ENCODE measurements at regions of chr9 and their contacts with region 1.

Region 1: GRCh38 chr9:97632985-97633858 is at the starts of genes NCBP1 and TSTD2:
- DNase-seq: peak; percentile 98
- ATAC-seq: peak; percentile 91
- H3K4me3 Mint-ChIP-seq: peak within 1 kb of the TSS; percentile 92
- H3K27ac Mint-ChIP-seq: peak within 1 kb of the TSS; percentile 99
- H3K4me1 Mint-ChIP-seq: peaks cover 48% of the 10 kb centered on the region
- H3K27me3 Mint-ChIP-seq: no peaks in the 10 kb centered on the region
- total RNA-seq, gene NCBP1: 42.2 to 43.0 TPM
- total RNA-seq, gene TSTD2: 12.7 to 15.0 TPM

Region 2: DNA sequence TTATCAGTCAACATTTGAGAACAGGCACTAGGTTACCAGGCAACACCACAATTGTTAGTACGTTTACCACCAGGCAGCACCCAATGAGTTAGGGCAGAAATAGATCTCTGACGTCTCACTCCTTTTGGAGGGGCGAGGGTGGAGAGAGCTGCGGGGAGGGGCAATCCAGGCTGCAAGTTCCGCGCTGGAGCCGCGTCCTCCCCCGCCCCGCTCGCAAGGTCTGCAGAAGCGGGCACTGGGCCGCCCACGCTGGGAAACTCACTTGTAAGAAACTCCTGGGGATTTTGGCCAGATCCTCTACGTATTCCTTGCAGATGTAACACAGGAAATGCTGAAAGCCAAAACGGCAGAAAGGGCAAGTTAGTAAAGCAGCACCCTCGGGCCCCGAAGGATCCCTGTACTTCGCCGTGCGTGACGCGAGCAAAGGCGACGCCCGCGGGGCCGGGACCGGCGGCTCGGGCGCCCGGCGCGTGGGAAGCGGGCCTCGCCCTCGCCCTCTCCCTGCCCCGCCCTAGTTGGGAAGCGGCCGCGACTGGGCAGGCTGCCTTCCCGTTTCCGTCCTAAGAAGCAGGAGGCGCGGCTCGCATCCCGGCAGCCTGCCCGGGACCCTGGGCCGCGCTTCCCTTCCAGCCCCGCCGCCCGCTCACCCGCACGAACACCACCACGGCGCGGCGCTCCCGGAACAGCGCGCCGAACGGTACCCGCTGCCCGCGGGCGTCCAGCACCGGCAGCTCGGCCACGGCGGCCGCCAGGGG is 978.6 kb before region 1 on chr9:
- CTCF ChIA-PET with region 1: no interaction called
- POLR2A ChIA-PET with region 1: no interaction called
- intact Hi-C with region 1: loop called in 1 of 2 experiments (anchors 2 kb)
- DNase-seq: peak; percentile 78
- ATAC-seq: peak; percentile 69
- H3K4me3 Mint-ChIP-seq: peak overlapping the region; percentile 78
- H3K27ac Mint-ChIP-seq: peak overlapping the region; percentile 78
- H3K4me1 Mint-ChIP-seq: peaks cover 15% of the 10 kb centered on the region
- H3K27me3 Mint-ChIP-seq: no peaks in the 10 kb centered on the region

Region 3: GRCh38 chr9:97411789-97412625 is 221.2 kb before region 1 on chr9 and contains the start of gene TDRD7:
- CTCF ChIA-PET with region 1: interaction called, 5 read pairs
- POLR2A ChIA-PET with region 1: no interaction called
- intact Hi-C with region 1: loop called in 1 of 2 experiments (anchors 1 kb)
- DNase-seq: peak; percentile 94
- ATAC-seq: peak; percentile 91
- H3K4me3 Mint-ChIP-seq: peak within 1 kb of the TSS; percentile 74
- H3K27ac Mint-ChIP-seq: peak within 1 kb of the TSS; percentile 58
- H3K4me1 Mint-ChIP-seq: peaks cover 22% of the 10 kb centered on the region
- H3K27me3 Mint-ChIP-seq: peaks cover 16% of the 10 kb centered on the region
- total RNA-seq, gene TDRD7: 9.3 TPM

Region 4: DNA sequence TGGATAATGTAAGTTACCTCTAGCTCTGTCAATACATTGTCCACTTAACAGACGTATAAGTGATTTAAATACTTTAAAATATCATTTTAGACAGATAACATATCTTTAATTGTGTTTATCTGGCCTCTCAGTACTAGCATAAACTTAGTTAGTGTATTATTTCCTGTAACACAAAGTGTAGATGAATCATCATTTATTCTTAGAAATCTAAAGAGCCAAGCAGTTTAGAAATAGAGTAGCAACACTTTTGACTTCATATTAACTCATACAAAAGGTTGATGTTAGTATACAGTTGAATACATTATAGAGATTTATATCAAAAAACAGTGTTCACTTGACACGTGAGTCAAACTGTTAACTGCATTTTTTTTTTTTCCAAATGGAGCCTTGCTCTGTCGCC is 18.4 kb after region 1 on chr9:
- CTCF ChIA-PET with region 1: interaction called, 6 read pairs
- POLR2A ChIA-PET with region 1: no interaction called
- intact Hi-C with region 1: loop called in 1 of 2 experiments (anchors 2 kb)
- DNase-seq: no peak
- ATAC-seq: peak; percentile 53
- H3K4me3 Mint-ChIP-seq: no peak overlapping the region
- H3K27ac Mint-ChIP-seq: peak overlapping the region; percentile 55
- H3K4me1 Mint-ChIP-seq: no peaks in the 10 kb centered on the region
- H3K27me3 Mint-ChIP-seq: no peaks in the 10 kb centered on the region

Region 5: DNA sequence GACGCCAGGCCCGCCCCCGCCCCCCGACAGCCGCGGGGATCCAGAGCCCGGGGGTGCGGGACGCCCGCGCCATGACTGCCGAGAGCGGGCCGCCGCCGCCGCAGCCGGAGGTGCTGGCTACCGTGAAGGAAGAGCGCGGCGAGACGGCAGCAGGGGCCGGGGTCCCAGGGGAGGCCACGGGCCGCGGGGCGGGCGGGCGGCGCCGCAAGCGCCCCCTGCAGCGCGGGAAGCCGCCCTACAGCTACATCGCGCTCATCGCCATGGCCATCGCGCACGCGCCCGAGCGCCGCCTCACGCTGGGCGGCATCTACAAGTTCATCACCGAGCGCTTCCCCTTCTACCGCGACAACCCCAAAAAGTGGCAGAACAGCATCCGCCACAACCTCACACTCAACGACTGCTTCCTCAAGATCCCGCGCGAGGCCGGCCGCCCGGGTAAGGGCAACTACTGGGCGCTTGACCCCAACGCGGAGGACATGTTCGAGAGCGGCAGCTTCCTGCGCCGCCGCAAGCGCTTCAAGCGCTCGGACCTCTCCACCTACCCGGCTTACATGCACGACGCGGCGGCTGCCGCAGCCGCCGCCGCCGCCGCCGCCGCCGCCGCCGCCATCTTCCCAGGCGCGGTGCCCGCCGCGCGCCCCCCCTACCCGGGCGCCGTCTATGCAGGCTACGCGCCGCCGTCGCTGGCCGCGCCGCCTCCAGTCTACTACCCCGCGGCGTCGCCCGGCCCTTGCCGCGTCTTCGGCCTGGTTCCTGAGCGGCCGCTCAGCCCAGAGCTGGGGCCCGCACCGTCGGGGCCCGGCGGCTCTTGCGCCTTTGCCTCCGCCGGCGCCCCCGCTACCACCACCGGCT is 220.8 kb after region 1 on chr9:
- CTCF ChIA-PET with region 1: no interaction called
- POLR2A ChIA-PET with region 1: no interaction called
- intact Hi-C with region 1: loop called in 1 of 2 experiments (anchors 1 kb)
- DNase-seq: peak; percentile 85
- ATAC-seq: peak; percentile 88
- H3K4me3 Mint-ChIP-seq: peak overlapping the region; percentile 82
- H3K27ac Mint-ChIP-seq: no peak overlapping the region
- H3K4me1 Mint-ChIP-seq: peaks cover 23% of the 10 kb centered on the region
- H3K27me3 Mint-ChIP-seq: peaks cover 74% of the 10 kb centered on the region

Region 6: GRCh38 chr9:97930972-97931371 is 297.8 kb after region 1 on chr9:
- CTCF ChIA-PET with region 1: no interaction called
- POLR2A ChIA-PET with region 1: no interaction called
- intact Hi-C with region 1: no loop called
- DNase-seq: no peak
- ATAC-seq: peak; percentile 55
- H3K4me3 Mint-ChIP-seq: peak overlapping the region; percentile 32
- H3K27ac Mint-ChIP-seq: peak overlapping the region; percentile 89
- H3K4me1 Mint-ChIP-seq: peaks cover 52% of the 10 kb centered on the region
- H3K27me3 Mint-ChIP-seq: no peaks in the 10 kb centered on the region

Region 7: GRCh38 chr9:98007251-98007928 is 374.2 kb after region 1 on chr9:
- CTCF ChIA-PET with region 1: no interaction called
- POLR2A ChIA-PET with region 1: no interaction called
- intact Hi-C with region 1: loop called in 1 of 2 experiments (anchors 5 kb)
- DNase-seq: no peak
- ATAC-seq: peak; percentile 67
- H3K4me3 Mint-ChIP-seq: no peak overlapping the region
- H3K27ac Mint-ChIP-seq: peak overlapping the region; percentile 53
- H3K4me1 Mint-ChIP-seq: peaks cover 42% of the 10 kb centered on the region
- H3K27me3 Mint-ChIP-seq: no peaks in the 10 kb centered on the region